ENCODE measurements at regions of chr4 and their contacts with region 1.

Region 1: DNA sequence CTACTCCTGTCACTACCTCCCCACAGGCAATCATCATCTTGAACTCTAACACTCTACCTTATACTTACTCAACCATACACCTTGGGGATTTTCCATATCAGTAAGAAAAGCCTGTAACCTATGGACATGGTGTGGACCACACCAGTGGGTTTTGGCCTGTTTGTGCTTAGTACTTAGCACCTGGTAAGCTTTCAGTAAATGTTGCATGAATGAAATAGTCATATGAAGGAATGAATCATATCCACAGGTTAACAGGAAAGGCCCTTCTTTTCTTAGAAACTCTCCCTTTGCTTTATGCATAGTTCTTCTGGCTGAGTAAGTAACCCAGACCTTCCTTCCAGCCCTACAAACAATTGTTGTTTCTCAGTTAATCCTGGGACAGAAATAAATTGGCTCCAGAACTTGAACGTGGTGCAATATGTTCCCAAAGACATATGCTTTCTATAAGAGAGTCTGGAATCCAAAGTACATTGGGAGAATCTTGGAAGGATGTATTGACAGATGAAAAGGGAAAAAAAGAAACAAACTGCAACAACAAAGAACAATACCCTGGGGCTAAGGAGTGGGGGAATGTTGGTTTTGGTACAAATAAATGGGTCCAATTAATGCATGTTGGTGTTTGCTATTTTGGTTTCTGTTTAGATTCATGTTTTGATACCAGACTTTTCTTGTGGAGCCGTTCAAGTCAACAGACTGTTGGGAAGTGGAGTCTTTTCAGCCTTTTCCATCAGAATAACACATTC is 27.8 kb downstream of the RASL11B start:
- DNase-seq: no peak

Region 2: DNA sequence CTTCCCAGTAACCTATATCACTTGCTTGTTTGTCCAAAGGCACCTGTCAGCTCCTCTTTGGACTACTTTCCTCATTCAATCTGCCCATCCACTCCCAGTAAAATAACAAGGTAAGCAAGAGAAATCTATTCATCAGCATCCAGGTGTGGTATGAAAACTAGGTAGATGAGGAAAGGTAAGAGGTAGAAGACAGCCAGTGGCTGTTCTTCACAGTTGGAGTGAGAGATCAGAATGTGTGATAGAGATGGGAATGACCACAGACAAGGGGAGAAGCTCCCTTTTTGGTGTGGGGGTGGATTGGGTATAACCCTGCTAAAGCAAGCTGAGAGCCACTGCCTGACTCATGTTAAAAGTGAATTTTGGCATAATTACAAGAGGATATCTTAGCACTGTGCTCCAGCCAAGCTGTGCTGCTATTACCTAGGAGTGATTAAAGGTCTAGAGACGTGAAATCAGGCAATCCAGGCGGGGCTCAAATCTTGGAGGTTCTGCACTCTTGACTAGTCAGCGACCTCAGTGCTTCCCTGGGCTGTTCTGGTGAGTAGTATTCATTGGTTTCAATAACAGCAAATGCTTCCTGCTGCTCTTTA is 55.9 kb before region 1 on chr4:
- intact Hi-C with region 1: no loop called
- DNase-seq: no peak

Region 3: DNA sequence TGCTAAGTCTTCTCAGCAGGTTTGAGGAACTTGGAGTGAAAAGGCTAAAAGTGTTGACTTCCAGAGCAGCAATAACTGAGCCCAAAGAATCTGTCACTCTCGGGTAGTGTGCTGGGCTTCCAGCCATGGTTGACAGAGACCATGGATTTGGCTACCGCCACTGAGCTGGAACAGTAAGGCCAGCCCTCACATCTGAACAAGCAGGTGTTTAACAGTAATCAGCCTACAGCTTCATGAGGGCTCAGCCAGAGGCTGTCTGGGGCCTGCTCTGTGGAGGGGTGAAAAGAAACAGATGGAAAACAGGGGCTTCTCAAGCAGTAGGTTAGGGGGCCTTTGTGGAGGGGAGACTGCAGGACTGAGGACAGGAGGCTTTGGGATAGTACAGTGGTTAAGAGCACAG is 12.9 kb before region 1 on chr4:
- intact Hi-C with region 1: loop called in 1 of 2 experiments (anchors 1 kb)
- DNase-seq: no peak